Prostate gland (tissue), 2 donors: ENCODE measurements at regions of chr1 and their contacts with region 1.

Region 1: GRCh38 chr1:35641233-35641866 is at the start of gene PSMB2:
- DNase-seq: peak; percentile 95
- H3K4me3 ChIP-seq: peak within 1 kb of the TSS; percentile 60 to 79
- H3K27ac ChIP-seq: peak within 1 kb of the TSS; percentile 88
- H3K4me1 ChIP-seq: peaks cover 4% of the 10 kb centered on the region
- H3K27me3 ChIP-seq: no peaks in the 10 kb centered on the region
- CTCF ChIP-seq: no peak
- POLR2A ChIP-seq: peak; percentile 62
- total RNA-seq, gene PSMB2: 53.6 to 64.8 TPM

Region 2: GRCh38 chr1:35157904-35158303 is 483.4 kb before region 1 on chr1:
- intact Hi-C with region 1: no loop called
- DNase-seq: no peak
- H3K4me3 ChIP-seq: no peak overlapping the region
- H3K27ac ChIP-seq: no peak overlapping the region
- H3K4me1 ChIP-seq: no peaks in the 10 kb centered on the region
- H3K27me3 ChIP-seq: no peaks in the 10 kb centered on the region
- CTCF ChIP-seq: no peak
- POLR2A ChIP-seq: no peak

Region 3: GRCh38 chr1:35481229-35481628 is 160.1 kb before region 1 on chr1:
- intact Hi-C with region 1: no loop called
- DNase-seq: no peak
- H3K4me3 ChIP-seq: no peak overlapping the region
- H3K27ac ChIP-seq: no peak overlapping the region
- H3K4me1 ChIP-seq: no peaks in the 10 kb centered on the region
- H3K27me3 ChIP-seq: no peaks in the 10 kb centered on the region
- CTCF ChIP-seq: no peak
- POLR2A ChIP-seq: no peak

Region 4: GRCh38 chr1:35715568-35716002 is 74.2 kb after region 1 on chr1:
- intact Hi-C with region 1: loop called (anchors 5 kb)
- DNase-seq: peak; percentile 60
- H3K4me3 ChIP-seq: no peak overlapping the region
- H3K27ac ChIP-seq: no peak overlapping the region
- H3K4me1 ChIP-seq: peaks cover 3% of the 10 kb centered on the region
- H3K27me3 ChIP-seq: no peaks in the 10 kb centered on the region
- CTCF ChIP-seq: peak; percentile 62 to 74 (median 68)
- POLR2A ChIP-seq: no peak